Naive thymus-derived CD4-positive, alpha-beta T cell (primary cell): ENCODE measurements at regions of chr20 and their contacts with region 1.

Region 1: GRCh38 chr20:41136680-41137613 is at the start of gene PLCG1:
- DNase-seq: peak; percentile 74 to 89 (median 82)
- ATAC-seq: peak; percentile 84
- H3K4me3 ChIP-seq: peak within 1 kb of the TSS; percentile 82
- H3K4me3 Mint-ChIP-seq: peak within 1 kb of the TSS; percentile 89 to 98 (median 95)
- H3K27ac ChIP-seq: peak within 1 kb of the TSS; percentile 91
- H3K27ac Mint-ChIP-seq: peak within 1 kb of the TSS; percentile 86 to 100 (median 96)
- H3K4me1 ChIP-seq: peaks cover 32 to 40% of the 10 kb centered on the region in 2 donors
- H3K4me1 Mint-ChIP-seq: peaks cover 48 to 66% (median 61%) of the 10 kb centered on the region in 7 donors
- H3K27me3 ChIP-seq: no peaks in the 10 kb centered on the region
- H3K27me3 Mint-ChIP-seq: no peaks in the 10 kb centered on the region
- total RNA-seq, gene PLCG1: 343 to 559 (median 418) TPM

Region 2: DNA sequence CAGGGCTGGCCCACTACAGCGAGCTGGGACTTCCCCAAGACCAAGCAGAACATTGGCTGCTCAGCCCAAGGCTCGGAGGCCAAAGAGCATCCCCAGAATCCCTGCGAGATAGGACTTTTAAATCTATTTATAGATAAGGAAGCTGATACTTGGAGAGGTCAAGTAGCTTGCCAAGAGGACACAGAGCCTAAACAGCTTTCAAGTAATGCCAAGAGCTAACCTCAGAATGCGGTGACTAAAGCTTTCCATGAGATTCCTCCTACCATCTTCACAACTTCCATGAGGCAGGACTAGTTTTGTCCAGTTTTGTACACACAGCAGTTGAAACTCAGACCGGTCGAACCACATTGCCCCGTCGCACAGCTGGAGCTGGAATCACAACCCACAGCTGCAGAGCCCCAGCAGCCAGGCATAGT is 276.5 kb before region 1 on chr20:
- CTCF ChIA-PET with region 1: no interaction called
- POLR2A ChIA-PET with region 1: no interaction called
- intact Hi-C with region 1: no loop called
- DNase-seq: no peak
- ATAC-seq: no peak
- H3K4me3 ChIP-seq: no peak overlapping the region
- H3K4me3 Mint-ChIP-seq: no peak overlapping the region
- H3K27ac ChIP-seq: no peak overlapping the region
- H3K27ac Mint-ChIP-seq: no peak overlapping the region
- H3K4me1 ChIP-seq: no peaks in the 10 kb centered on the region
- H3K4me1 Mint-ChIP-seq: peaks cover 0 to 5% (median 0%) of the 10 kb centered on the region in 7 donors
- H3K27me3 ChIP-seq: no peaks in the 10 kb centered on the region
- H3K27me3 Mint-ChIP-seq: no peaks in the 10 kb centered on the region

Region 3: DNA sequence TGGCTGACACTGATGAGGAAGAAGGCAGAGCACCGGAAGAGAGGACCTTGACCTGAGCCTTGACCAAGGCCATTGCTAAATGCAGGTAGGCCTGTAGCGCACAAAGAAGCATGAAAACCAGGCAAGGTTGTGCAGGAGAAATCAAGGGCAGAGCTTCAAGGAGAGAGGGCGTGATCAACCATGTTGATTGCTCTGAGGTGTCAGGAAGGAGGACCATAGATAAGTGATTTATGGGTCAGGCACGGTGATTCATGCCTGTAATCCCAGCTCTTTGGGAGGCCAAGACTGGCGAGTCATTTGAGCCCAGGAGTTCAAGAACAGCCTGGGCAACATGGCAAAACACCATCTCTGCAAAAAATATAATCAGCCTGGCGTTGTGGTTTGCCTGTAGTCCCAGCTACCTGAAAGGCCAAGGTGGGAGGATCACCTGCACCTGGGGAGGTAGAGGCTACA is 12.8 kb after region 1 on chr20:
- CTCF ChIA-PET with region 1: interaction called, 236 read pairs
- POLR2A ChIA-PET with region 1: interaction called, 604 read pairs
- intact Hi-C with region 1: loop called (anchors 1 kb)
- DNase-seq: no peak
- ATAC-seq: no peak
- H3K4me3 ChIP-seq: no peak overlapping the region
- H3K4me3 Mint-ChIP-seq: peak overlapping the region; percentile 30 to 97 (median 70)
- H3K27ac ChIP-seq: peak overlapping the region; percentile 91
- H3K27ac Mint-ChIP-seq: peak overlapping the region; percentile 77 to 100 (median 94)
- H3K4me1 ChIP-seq: peaks cover 96 to 100% of the 10 kb centered on the region in 2 donors
- H3K4me1 Mint-ChIP-seq: peaks cover 80 to 100% (median 94%) of the 10 kb centered on the region in 7 donors
- H3K27me3 ChIP-seq: no peaks in the 10 kb centered on the region
- H3K27me3 Mint-ChIP-seq: no peaks in the 10 kb centered on the region

Region 4: GRCh38 chr20:41173161-41173721 is 36.3 kb after region 1 on chr20:
- CTCF ChIA-PET with region 1: interaction called, 21 read pairs
- POLR2A ChIA-PET with region 1: interaction called, 604 read pairs
- intact Hi-C with region 1: loop called (anchors 1 kb)
- DNase-seq: peak; percentile 34 to 72 (median 56)
- ATAC-seq: peak; percentile 88
- H3K4me3 ChIP-seq: no peak overlapping the region
- H3K4me3 Mint-ChIP-seq: no peak overlapping the region
- H3K27ac ChIP-seq: no peak overlapping the region
- H3K27ac Mint-ChIP-seq: peak overlapping the region in 7 of 9 donors; percentile 49 to 88 (median 79)
- H3K4me1 ChIP-seq: no peaks in the 10 kb centered on the region
- H3K4me1 Mint-ChIP-seq: peaks cover 8 to 36% (median 21%) of the 10 kb centered on the region in 7 donors
- H3K27me3 ChIP-seq: no peaks in the 10 kb centered on the region
- H3K27me3 Mint-ChIP-seq: no peaks in the 10 kb centered on the region

Region 5: GRCh38 chr20:41317536-41318270 is 180.8 kb after region 1 on chr20 and contains the start of gene ZHX3:
- CTCF ChIA-PET with region 1: interaction called, 4 read pairs
- POLR2A ChIA-PET with region 1: no interaction called
- intact Hi-C with region 1: loop called (anchors 1 kb)
- DNase-seq: peak; percentile 90 to 97 (median 95)
- ATAC-seq: peak; percentile 99
- H3K4me3 ChIP-seq: peak within 1 kb of the TSS; percentile 47
- H3K4me3 Mint-ChIP-seq: peak within 1 kb of the TSS; percentile 74 to 92 (median 84)
- H3K27ac ChIP-seq: peak within 1 kb of the TSS; percentile 75
- H3K27ac Mint-ChIP-seq: peak within 1 kb of the TSS; percentile 48 to 87 (median 84)
- H3K4me1 ChIP-seq: no peaks in the 10 kb centered on the region
- H3K4me1 Mint-ChIP-seq: peaks cover 11 to 34% (median 28%) of the 10 kb centered on the region in 7 donors
- H3K27me3 ChIP-seq: no peaks in the 10 kb centered on the region
- H3K27me3 Mint-ChIP-seq: peaks cover 0 to 7% (median 0%) of the 10 kb centered on the region in 5 donors
- total RNA-seq, gene ZHX3: 7.9 to 12.8 (median 9.8) TPM

Region 6: DNA sequence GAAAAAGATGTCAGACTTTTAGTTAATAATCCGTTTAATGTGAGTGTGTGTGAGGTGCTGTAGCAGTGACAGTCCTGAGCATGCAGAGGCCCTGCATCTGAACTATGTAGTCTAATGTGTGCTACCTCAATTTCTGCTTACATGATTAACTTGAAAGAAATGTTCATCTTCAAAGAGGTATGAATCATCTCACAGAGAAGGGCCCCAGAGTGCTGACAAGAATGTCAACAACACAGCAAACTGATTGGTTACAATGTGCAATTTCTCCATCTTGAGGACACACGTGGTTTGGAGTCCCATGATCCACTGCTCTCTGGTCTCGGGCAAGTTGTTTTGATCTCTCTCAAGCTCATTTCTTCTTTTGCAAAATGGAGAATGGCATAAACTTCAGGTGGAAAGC is 291.3 kb after region 1 on chr20:
- CTCF ChIA-PET with region 1: no interaction called
- POLR2A ChIA-PET with region 1: no interaction called
- intact Hi-C with region 1: loop called in 1 of 2 experiments (anchors 1 kb)
- DNase-seq: peak in 8 of 9 donors; percentile 29 to 76 (median 57)
- ATAC-seq: peak; percentile 95
- H3K4me3 ChIP-seq: no peak overlapping the region
- H3K4me3 Mint-ChIP-seq: peak overlapping the region in 9 of 10 donors; percentile 3 to 85 (median 47)
- H3K27ac ChIP-seq: peak overlapping the region; percentile 54
- H3K27ac Mint-ChIP-seq: peak overlapping the region; percentile 31 to 98 (median 89)
- H3K4me1 ChIP-seq: peaks cover 0 to 22% of the 10 kb centered on the region in 2 donors
- H3K4me1 Mint-ChIP-seq: peaks cover 19 to 54% (median 51%) of the 10 kb centered on the region in 7 donors
- H3K27me3 ChIP-seq: no peaks in the 10 kb centered on the region
- H3K27me3 Mint-ChIP-seq: no peaks in the 10 kb centered on the region